B cell (primary cell): ENCODE measurements at regions of chrX and their contacts with region 1.

Region 1: DNA sequence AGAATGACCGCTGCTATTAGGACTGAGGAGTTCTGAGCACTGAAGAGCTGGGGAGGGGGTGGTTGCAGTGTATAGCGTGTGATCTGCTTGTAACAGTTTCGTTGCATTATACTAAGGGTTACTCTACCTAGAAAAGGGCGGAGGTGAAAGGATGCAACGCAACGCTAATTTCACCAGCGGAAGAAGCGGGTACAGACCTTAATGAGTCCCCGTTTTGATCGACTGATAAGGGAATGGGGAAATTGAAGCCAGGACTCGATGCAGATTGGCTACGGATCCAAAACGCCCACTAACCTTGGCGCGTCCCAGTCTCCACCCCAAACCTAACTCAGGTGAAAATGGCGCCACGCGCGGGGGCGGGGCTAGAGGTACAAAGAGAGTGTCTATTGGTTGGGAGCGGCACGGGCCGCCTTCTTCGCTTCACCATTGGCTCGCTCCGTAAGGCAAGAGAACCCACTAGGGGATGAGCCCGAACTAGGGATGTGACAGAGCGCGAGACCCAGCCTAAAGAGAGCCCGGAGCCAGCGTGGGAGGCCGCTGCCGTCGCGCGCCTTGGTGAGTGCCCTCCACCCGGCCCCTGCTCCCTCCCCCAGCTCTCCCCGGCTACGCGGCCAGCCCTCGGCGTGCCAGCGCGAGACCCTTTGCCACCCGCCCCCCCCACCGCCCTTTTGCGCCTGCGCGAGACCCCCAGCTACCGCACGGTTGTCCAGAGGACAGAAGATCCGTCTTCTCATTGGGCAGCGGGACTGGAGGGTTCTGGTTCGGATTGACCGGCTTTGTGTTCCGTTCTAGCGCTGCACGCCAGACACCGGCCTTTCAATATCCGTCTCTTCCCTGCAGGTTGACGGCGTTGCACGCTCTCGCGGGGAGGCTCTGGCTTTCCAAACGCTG is at the start of gene EBP:
- DNase-seq: peak; percentile 94
- ATAC-seq: peak; percentile 97
- H3K4me3 ChIP-seq: peak within 1 kb of the TSS; percentile 47 to 72 (median 62)
- H3K4me3 Mint-ChIP-seq: peak within 1 kb of the TSS; percentile 87
- H3K27ac ChIP-seq: peak within 1 kb of the TSS; percentile 74
- H3K27ac Mint-ChIP-seq: peak within 1 kb of the TSS; percentile 89
- H3K4me1 ChIP-seq: peaks cover 12 to 19% of the 10 kb centered on the region in 2 donors
- H3K4me1 Mint-ChIP-seq: peaks cover 12% of the 10 kb centered on the region
- H3K27me3 ChIP-seq: no peaks in the 10 kb centered on the region
- H3K27me3 Mint-ChIP-seq: no peaks in the 10 kb centered on the region
- CTCF ChIP-seq: no peak
- total RNA-seq, gene EBP: 27.9 and 33.4 TPM in 2 replicates

Region 2: GRCh38 chrX:46704767-46705386 is 1816.7 kb before region 1 on chrX:
- CTCF ChIA-PET with region 1: no interaction called
- POLR2A ChIA-PET with region 1: no interaction called
- intact Hi-C with region 1: no loop called
- DNase-seq: no peak
- ATAC-seq: peak; percentile 73
- H3K4me3 ChIP-seq: no peak overlapping the region
- H3K4me3 Mint-ChIP-seq: peak overlapping the region; percentile 20
- H3K27ac ChIP-seq: peak overlapping the region in 1 of 2 donors; percentile 42
- H3K27ac Mint-ChIP-seq: peak overlapping the region; percentile 55
- H3K4me1 ChIP-seq: peaks cover 30 to 31% of the 10 kb centered on the region in 2 donors
- H3K4me1 Mint-ChIP-seq: peaks cover 64% of the 10 kb centered on the region
- H3K27me3 ChIP-seq: no peaks in the 10 kb centered on the region
- H3K27me3 Mint-ChIP-seq: no peaks in the 10 kb centered on the region
- CTCF ChIP-seq: no peak

Region 3: GRCh38 chrX:47613082-47613481 is 908.5 kb before region 1 on chrX:
- CTCF ChIA-PET with region 1: no interaction called
- POLR2A ChIA-PET with region 1: interaction called, 10 read pairs
- intact Hi-C with region 1: no loop called
- DNase-seq: no peak
- ATAC-seq: no peak
- H3K4me3 ChIP-seq: no peak overlapping the region
- H3K4me3 Mint-ChIP-seq: no peak overlapping the region
- H3K27ac ChIP-seq: no peak overlapping the region
- H3K27ac Mint-ChIP-seq: no peak overlapping the region
- H3K4me1 ChIP-seq: no peaks in the 10 kb centered on the region
- H3K4me1 Mint-ChIP-seq: no peaks in the 10 kb centered on the region
- H3K27me3 ChIP-seq: peaks cover 0 to under 1% (median under 1%) of the 10 kb centered on the region in 4 experiments
- H3K27me3 Mint-ChIP-seq: peaks cover 20% of the 10 kb centered on the region
- CTCF ChIP-seq: no peak

Region 4: GRCh38 chrX:48539345-48540027 is 17.9 kb after region 1 on chrX and contains the start of gene TBC1D25:
- CTCF ChIA-PET with region 1: no interaction called
- POLR2A ChIA-PET with region 1: interaction called, 6 read pairs
- intact Hi-C with region 1: loop called (anchors 1 kb)
- DNase-seq: peak; percentile 97
- ATAC-seq: peak; percentile 79
- H3K4me3 ChIP-seq: peak within 1 kb of the TSS in 4 of 5 experiments; percentile 66 to 76 (median 74)
- H3K4me3 Mint-ChIP-seq: peak within 1 kb of the TSS; percentile 91
- H3K27ac ChIP-seq: peak within 1 kb of the TSS; percentile 94 to 97
- H3K27ac Mint-ChIP-seq: peak within 1 kb of the TSS; percentile 97
- H3K4me1 ChIP-seq: peaks cover 10 to 18% of the 10 kb centered on the region in 2 donors
- H3K4me1 Mint-ChIP-seq: peaks cover 20% of the 10 kb centered on the region
- H3K27me3 ChIP-seq: no peaks in the 10 kb centered on the region
- H3K27me3 Mint-ChIP-seq: no peaks in the 10 kb centered on the region
- CTCF ChIP-seq: peak; percentile 50
- total RNA-seq, gene TBC1D25: 24.6 and 25.2 TPM in 2 replicates

Region 5: DNA sequence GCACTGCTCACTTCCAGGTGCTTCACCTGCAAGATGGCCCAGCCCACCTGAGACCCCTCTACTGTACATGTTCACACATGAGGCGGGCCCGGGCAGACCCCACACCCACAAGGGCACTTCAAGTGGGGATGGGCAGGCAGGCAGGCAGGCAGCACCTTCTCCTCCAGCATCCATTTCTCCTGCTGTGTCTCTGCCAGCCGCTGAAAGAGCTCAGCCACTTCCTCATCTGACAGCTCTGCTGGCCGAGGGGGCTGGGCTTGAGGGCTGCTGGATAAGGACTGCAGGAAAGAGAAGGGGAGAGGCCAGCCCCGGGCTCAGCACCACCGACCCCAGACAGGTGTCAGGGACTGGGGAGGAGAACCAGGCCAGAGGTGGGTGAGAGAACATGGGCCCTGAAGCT is 454.5 kb after region 1 on chrX:
- CTCF ChIA-PET with region 1: no interaction called
- POLR2A ChIA-PET with region 1: no interaction called
- intact Hi-C with region 1: no loop called
- DNase-seq: no peak
- ATAC-seq: no peak
- H3K4me3 ChIP-seq: no peak overlapping the region
- H3K4me3 Mint-ChIP-seq: no peak overlapping the region
- H3K27ac ChIP-seq: no peak overlapping the region
- H3K27ac Mint-ChIP-seq: no peak overlapping the region
- H3K4me1 ChIP-seq: peaks cover 12 to 14% of the 10 kb centered on the region in 2 donors
- H3K4me1 Mint-ChIP-seq: peaks cover 15% of the 10 kb centered on the region
- H3K27me3 ChIP-seq: no peaks in the 10 kb centered on the region
- H3K27me3 Mint-ChIP-seq: no peaks in the 10 kb centered on the region
- CTCF ChIP-seq: no peak